ENCODE measurements at regions of chr21 and their contacts with region 1.

Region 1: DNA sequence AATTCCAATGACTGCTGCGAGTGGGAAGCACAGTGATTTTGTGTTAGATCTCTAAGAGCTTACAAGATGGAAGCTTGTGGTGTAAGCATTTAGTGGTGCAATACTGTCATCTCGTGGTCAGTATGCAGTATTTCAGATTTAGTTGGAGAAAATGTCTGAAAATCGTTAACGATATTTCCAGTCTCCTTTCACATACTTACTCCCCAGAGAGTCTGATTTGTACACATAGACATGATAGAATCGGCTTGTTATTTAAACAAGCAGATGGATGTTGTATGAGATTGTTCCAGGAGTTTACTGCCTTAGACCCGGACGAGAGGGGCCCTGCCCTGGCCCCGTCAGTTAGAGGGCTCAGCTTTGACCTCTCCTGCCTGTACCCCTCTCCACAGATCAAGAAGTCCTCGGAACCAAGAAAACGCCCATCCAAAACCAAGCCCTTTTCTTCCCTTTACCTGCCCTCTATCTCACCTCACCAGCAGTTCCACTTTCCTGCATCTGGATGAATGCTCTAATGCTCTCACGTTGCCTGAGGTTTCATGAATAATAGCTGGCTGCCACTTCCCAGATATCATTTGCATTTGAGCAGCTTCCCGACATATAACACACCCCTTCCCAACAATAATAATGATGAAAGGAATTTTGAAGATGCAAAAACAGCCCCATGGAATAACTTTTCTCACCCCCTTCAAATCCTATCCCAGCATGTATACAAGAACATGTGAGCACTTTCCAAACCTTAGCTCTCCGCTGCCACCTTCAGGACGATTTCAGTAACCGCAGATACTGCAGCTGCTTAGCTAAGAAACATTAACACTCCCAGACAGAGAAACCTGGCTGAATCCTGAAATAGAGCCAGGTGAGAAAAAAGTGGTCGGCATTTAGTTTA is 247.3 kb downstream of the LTN1 start:
- DNase-seq: peak; percentile 47 to 81
- ATAC-seq: peak; percentile 83 to 96 (median 91)
- H3K4me3 ChIP-seq: peak overlapping the region in 9 of 10 donors; percentile 18 to 59 (median 54)
- H3K27ac ChIP-seq: peak overlapping the region; percentile 18 to 93 (median 84)
- H3K4me1 ChIP-seq: peaks cover 0 to 32% (median 13%) of the 10 kb centered on the region in 9 donors
- H3K27me3 ChIP-seq: no peaks in the 10 kb centered on the region
- CTCF ChIP-seq: peak; percentile 89 to 96 (median 94)

Region 2: GRCh38 chr21:27564684-27565301 is 1180.6 kb before region 1 on chr21:
- intact Hi-C with region 1: loop called in 1 of 10 experiments (anchors 10 kb)
- DNase-seq: peak; percentile 17 to 43
- ATAC-seq: peak in 7 of 8 donors; percentile 67 to 82 (median 76)
- H3K4me3 ChIP-seq: no peak overlapping the region
- H3K27ac ChIP-seq: no peak overlapping the region
- H3K4me1 ChIP-seq: peaks cover 0 to 5% (median under 1%) of the 10 kb centered on the region in 9 donors
- H3K27me3 ChIP-seq: no peaks in the 10 kb centered on the region
- CTCF ChIP-seq: peak; percentile 54 to 87 (median 82)

Region 3: DNA sequence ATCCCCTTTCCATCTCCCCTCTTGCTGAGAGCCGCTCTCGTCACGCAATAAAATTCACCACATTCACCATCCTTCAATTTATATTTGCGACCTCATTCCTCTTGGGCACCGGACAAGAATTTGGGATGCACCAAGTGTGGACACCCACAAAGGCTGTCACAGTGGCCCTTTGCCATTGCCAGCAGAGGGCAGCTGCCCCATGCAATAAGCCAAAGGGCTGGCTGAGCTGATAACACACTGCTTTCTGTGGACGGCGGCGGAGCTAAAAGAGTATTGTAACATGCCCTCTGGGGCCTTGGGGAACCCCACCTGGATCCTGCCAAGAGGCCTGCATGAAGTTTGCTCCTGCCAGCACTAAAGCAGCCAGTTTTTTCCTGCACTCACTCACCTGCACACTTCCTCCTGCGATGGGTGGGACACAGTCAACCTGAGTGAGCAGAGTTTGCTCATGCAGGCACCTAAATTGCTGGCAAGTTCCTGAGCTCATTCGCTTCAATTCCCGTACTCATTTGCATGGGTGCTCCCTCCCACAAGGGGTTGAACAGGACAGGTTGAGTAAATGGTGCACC is 986.2 kb before region 1 on chr21:
- intact Hi-C with region 1: loop called in 3 of 10 experiments (anchors 5 to 10 kb)
- DNase-seq: peak; percentile 18 to 27
- ATAC-seq: peak in 6 of 8 donors; percentile 64 to 83 (median 76)
- H3K4me3 ChIP-seq: no peak overlapping the region
- H3K27ac ChIP-seq: no peak overlapping the region
- H3K4me1 ChIP-seq: peaks cover 0 to 14% (median 7%) of the 10 kb centered on the region in 9 donors
- H3K27me3 ChIP-seq: no peaks in the 10 kb centered on the region
- CTCF ChIP-seq: peak in 8 of 9 donors; percentile 37 to 63 (median 52)

Region 4: GRCh38 chr21:28069450-28069923 is 675.9 kb before region 1 on chr21:
- intact Hi-C with region 1: loop called in 2 of 10 experiments (anchors 10 kb)
- DNase-seq: no peak
- ATAC-seq: no peak
- H3K4me3 ChIP-seq: no peak overlapping the region
- H3K27ac ChIP-seq: no peak overlapping the region
- H3K4me1 ChIP-seq: peaks cover 0 to 32% (median 24%) of the 10 kb centered on the region in 9 donors
- H3K27me3 ChIP-seq: no peaks in the 10 kb centered on the region
- CTCF ChIP-seq: no peak

Region 5: DNA sequence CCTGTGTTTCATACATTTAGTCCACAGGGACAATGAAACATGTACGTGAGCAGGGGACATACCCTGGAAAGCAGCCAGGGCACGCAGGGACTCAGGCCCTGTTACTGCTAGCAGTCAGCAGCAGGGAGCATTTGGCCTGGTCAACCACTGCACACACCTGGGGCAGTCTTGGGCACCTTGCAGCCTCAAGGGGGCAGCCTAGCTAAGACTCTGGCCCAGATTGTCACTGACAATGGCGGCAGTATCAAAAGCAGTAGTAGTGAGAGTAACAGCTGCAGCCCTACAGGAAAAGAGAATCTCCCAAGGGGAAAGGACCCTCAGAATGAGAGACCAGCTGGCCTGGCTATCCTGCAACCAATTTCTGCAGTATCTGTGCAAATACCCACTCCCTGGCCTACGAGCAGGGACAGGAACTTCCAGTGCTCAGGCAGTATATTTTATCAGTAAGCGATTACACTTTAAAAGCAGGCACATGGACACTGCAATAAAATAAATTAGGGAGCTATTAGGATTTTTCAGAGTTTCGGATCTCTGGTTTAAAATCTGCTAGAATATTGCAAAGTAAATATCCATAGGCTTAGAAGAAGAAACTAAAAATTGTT is 228.3 kb before region 1 on chr21:
- intact Hi-C with region 1: loop called in 9 of 10 experiments (anchors 1 to 5 kb)
- DNase-seq: peak; percentile 65 to 74
- ATAC-seq: peak; percentile 92 to 97 (median 95)
- H3K4me3 ChIP-seq: peak overlapping the region in 1 of 10 donors; percentile 11
- H3K27ac ChIP-seq: peak overlapping the region in 2 of 10 donors; percentile 4 to 53
- H3K4me1 ChIP-seq: peaks cover 0 to 34% (median 16%) of the 10 kb centered on the region in 9 donors
- H3K27me3 ChIP-seq: no peaks in the 10 kb centered on the region
- CTCF ChIP-seq: peak; percentile 53 to 86 (median 71)

Region 6: GRCh38 chr21:28899744-28900143 is 154.4 kb after region 1 on chr21:
- intact Hi-C with region 1: no loop called
- DNase-seq: no peak
- ATAC-seq: peak in 1 of 8 donors; percentile 57
- H3K4me3 ChIP-seq: no peak overlapping the region
- H3K27ac ChIP-seq: no peak overlapping the region
- H3K4me1 ChIP-seq: no peaks in the 10 kb centered on the region
- H3K27me3 ChIP-seq: no peaks in the 10 kb centered on the region
- CTCF ChIP-seq: no peak

Region 7: DNA sequence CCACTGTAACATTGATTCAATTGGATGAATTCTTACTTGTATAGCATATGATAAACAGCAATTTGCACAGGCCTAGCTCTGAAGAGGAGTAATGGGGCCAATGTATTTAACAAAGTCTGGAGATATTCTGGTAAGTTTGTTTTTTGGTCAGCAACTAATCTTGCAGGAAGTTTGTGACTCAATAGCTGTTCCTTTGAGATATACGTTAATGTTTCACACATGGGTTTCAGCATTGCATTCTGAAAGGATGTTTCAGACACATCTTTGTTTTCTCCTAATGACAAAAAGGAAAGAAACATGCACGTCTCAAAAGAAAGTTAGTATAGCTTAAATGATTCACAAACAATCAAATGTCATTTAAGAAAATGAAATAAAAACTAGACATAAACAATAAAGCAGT is 198.3 kb after region 1 on chr21:
- intact Hi-C with region 1: loop called in 2 of 10 experiments (anchors 5 to 10 kb)
- DNase-seq: no peak
- ATAC-seq: no peak
- H3K4me3 ChIP-seq: no peak overlapping the region
- H3K27ac ChIP-seq: no peak overlapping the region
- H3K4me1 ChIP-seq: peaks cover 0 to 11% (median 4%) of the 10 kb centered on the region in 9 donors
- H3K27me3 ChIP-seq: no peaks in the 10 kb centered on the region
- CTCF ChIP-seq: no peak

Measured in heart right ventricle (tissue), 16 donors.